ENCODE measurements at regions of chr16 and their contacts with region 1.

Region 1: GRCh38 chr16:57084257-57084770 is 8.1 kb upstream of the CPNE2 start:
- DNase-seq: peak; percentile 62 to 74
- ATAC-seq: peak; percentile 78 to 89 (median 82)
- H3K4me3 ChIP-seq: no peak overlapping the region
- H3K27ac ChIP-seq: peak overlapping the region in 5 of 10 donors; percentile 9 to 59 (median 27)
- H3K4me1 ChIP-seq: peaks cover 0 to 14% (median 7%) of the 10 kb centered on the region in 9 donors
- H3K27me3 ChIP-seq: no peaks in the 10 kb centered on the region
- CTCF ChIP-seq: peak; percentile 97 to 99 (median 98)

Region 2: DNA sequence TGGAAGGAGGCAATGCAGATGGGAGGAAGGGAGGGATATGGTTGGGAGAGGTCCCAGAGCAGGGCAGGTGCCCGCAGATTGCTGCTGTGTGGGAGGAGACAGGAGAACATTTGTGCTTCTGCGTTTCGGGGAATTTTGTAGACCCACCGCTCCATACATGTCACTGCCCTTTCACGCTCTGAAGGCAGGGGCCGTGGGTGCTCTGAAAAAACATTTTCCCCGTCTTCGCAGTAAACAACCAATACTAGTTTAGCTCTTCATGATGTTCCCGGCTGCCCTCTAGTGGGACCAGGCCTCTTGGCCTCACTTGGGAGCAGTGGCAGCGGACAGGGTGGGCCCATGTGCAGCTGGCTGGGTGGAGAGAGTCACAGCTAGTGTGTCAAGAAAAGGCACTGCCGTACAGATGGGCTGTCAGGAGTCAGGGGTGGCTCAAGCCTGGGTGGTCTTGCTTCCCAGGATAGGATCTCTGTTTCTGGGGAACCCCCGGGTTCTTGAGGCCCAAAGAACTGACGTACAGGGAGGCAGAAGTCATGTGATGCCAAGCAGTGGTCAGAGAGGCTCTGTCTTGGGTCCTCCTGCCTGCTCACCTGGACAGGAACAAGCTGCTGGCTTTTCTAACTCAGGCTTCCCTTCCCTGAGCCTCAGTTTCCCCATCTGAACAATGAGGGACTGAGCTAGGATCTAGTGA is 38.5 kb before region 1 on chr16:
- intact Hi-C with region 1: no loop called
- DNase-seq: peak; percentile 71 to 73
- ATAC-seq: peak; percentile 55 to 83 (median 70)
- H3K4me3 ChIP-seq: peak overlapping the region in 2 of 10 donors; percentile 6 to 27
- H3K27ac ChIP-seq: peak overlapping the region in 1 of 10 donors; percentile 36
- H3K4me1 ChIP-seq: peaks cover 0 to 45% (median 11%) of the 10 kb centered on the region in 9 donors
- H3K27me3 ChIP-seq: no peaks in the 10 kb centered on the region
- CTCF ChIP-seq: peak; percentile 23 to 77 (median 65)

Region 3: DNA sequence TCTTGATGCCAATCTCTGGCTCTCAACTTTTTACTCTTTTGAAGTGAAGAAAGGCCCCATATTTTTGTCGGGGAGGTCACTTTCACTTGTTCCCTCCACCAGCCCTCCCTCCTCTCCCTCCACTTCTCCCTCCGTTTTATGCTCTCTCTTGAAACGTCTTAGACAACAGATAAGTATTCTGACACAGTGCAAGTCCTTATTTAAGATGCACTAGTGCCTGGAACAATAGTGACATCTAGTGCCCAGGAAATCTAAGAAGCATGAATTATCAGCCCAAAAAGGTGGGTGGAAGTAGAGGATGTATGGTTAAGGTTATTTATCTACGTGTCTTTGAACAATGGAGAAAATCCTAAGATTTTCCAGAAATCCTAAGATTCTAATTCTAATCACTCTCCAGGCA is 83.6 kb after region 1 on chr16:
- intact Hi-C with region 1: loop called in 9 of 10 experiments (anchors 1 to 5 kb)
- DNase-seq: no peak
- ATAC-seq: peak; percentile 65 to 91 (median 80)
- H3K4me3 ChIP-seq: no peak overlapping the region
- H3K27ac ChIP-seq: peak overlapping the region in 1 of 10 donors; percentile 66
- H3K4me1 ChIP-seq: peaks cover 0 to 28% (median 20%) of the 10 kb centered on the region in 9 donors
- H3K27me3 ChIP-seq: no peaks in the 10 kb centered on the region
- CTCF ChIP-seq: peak; percentile 51 to 81 (median 65)

Region 4: DNA sequence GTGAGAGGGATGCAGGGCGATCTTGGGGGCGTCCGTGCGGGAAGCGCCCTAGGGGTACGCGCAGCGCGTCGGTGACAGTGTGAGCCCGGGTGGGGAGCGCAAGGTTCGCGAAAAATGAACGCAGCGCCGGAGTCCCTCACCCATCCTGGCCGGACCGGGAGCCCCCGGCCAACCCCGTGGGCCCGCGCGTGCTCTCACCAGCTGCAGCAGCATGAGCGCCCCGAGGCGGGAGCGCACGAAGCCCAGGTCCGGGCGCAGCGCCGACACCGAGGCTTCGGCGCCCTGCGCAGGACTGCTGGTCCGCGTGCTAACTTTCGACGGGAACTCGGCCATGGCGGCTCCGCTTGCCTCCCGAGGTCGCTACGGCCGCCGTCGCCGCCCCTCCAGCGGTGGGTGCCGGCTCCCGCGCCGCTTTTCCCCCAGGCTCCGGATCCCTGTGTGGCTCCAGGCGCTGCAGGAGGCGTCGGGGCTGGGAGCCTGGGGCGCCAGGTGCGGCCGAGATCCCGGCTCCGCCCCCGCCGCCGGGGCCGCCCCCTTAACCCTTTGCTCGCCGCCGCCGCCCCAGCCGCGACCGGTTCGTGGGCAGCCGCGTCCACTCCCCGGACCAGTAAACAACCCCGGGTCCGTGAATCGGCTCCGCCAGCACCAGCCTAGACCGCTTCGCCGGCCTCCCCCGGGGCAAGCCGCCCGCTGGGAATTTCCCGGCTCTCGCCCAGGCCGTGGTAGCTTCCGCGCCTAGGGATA is 200.1 kb after region 1 on chr16 and contains the start of gene PLLP:
- intact Hi-C with region 1: loop called in 1 of 10 experiments (anchors 10 kb)
- DNase-seq: peak in 1 of 2 donors; percentile 40
- ATAC-seq: peak; percentile 51 to 77 (median 65)
- H3K4me3 ChIP-seq: peak within 1 kb of the TSS; percentile 43 to 70 (median 62)
- H3K27ac ChIP-seq: peak within 1 kb of the TSS in 5 of 10 donors; percentile 3 to 50 (median 20)
- H3K4me1 ChIP-seq: peaks cover 3 to 16% (median 13%) of the 10 kb centered on the region in 9 donors
- H3K27me3 ChIP-seq: peaks cover 0 to 34% (median 17%) of the 10 kb centered on the region in 7 donors
- CTCF ChIP-seq: no peak
- total RNA-seq, gene PLLP: 1.7 to 4.0 (median 2.2) TPM

Region 5: DNA sequence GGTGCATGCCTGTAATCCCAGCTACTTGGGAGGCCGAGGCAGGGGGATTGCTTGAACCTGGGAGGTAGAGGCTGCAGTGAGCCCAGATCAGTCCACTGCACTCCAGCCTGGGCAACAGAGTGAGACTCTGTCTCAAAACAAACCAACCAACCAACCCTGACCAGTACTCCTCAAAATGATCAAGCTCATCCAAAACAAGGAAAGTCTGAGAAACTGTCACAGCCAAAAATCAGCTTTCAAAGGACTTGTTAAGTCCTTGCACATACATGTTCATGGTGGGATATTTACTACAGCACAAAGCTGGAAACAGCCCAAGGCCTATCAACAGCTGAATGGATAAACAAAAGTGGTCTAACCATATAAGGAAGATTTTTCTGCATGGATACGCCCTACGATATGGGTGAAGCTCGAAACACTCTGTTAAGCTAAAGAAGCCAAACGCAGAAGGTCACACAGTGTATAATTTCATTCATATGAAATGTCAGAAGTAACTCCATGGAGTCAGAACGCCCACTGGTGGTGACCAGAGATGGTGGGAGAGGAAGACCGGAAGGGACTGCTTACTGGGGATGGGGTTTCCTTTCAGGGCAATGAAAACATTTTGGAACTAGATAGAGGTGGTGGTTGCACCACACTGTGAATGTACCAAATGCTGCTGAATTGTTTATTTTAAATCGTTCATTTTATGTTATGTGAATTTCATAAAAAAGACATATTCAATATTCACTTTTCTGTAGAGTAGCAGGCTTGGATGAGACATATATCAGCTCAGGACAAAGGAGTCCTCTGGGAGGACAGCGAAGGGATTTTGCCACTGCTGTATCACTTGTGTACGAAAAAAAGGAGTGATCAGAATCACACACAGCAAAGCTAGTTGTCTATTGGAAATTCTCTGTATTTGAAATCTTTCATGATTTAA is 338.0 kb after region 1 on chr16:
- intact Hi-C with region 1: loop called in 3 of 10 experiments (anchors 10 kb)
- DNase-seq: peak in 1 of 2 donors; percentile 57
- ATAC-seq: peak in 4 of 8 donors; percentile 36 to 65 (median 48)
- H3K4me3 ChIP-seq: no peak overlapping the region
- H3K27ac ChIP-seq: peak overlapping the region in 1 of 10 donors; percentile 41
- H3K4me1 ChIP-seq: peaks cover 8 to 51% (median 37%) of the 10 kb centered on the region in 9 donors
- H3K27me3 ChIP-seq: no peaks in the 10 kb centered on the region
- CTCF ChIP-seq: peak; percentile 15 to 82 (median 70)

Measured in heart right ventricle (tissue), 16 donors.